Breast epithelium (tissue), 4 donors: ENCODE measurements at regions of chr12 and their contacts with region 1.

Region 1: DNA sequence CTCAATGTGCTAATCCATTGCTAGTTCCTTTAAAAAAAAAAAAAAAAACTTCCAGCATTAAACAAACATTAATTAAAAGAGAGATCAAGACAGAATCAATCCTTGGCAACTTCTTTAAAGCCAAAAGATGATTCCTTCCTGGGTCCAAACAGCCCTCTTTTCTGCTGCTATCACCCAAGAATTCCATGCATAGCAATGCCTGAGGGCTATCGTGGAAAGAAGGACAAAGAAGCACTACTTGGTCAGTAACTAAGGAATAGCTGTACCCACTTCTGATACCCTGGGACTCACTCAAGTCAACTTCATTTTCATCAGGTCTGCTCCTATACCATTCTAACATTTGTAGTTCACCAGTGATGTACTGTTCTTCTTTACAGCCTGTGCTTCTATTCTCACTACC is 51.8 kb downstream of the SLC38A2 start:
- DNase-seq: no peak
- H3K4me3 ChIP-seq: no peak overlapping the region
- H3K27ac ChIP-seq: no peak overlapping the region
- H3K4me1 ChIP-seq: no peaks in the 10 kb centered on the region
- H3K27me3 ChIP-seq: no peaks in the 10 kb centered on the region
- CTCF ChIP-seq: no peak
- POLR2A ChIP-seq: no peak

Region 2: GRCh38 chr12:47004634-47005033 is 683.9 kb after region 1 on chr12:
- intact Hi-C with region 1: loop called (anchors 10 kb)
- DNase-seq: no peak
- H3K4me3 ChIP-seq: no peak overlapping the region
- H3K27ac ChIP-seq: no peak overlapping the region
- H3K4me1 ChIP-seq: no peaks in the 10 kb centered on the region
- H3K27me3 ChIP-seq: no peaks in the 10 kb centered on the region
- CTCF ChIP-seq: no peak
- POLR2A ChIP-seq: no peak